Activated CD4-positive, alpha-beta T cell treated with anti-CD3 and anti-CD28 coated beads for 36 hours (primary cell): ENCODE measurements at regions of chr14 and their contacts with region 1.

Region 1: GRCh38 chr14:67666750-67667449 is 7.5 kb downstream of the VTI1B start:
- DNase-seq: peak; percentile 46
- ATAC-seq: peak; percentile 80
- H3K4me3 Mint-ChIP-seq: no peak overlapping the region
- H3K27ac Mint-ChIP-seq: peak overlapping the region; percentile 68
- H3K4me1 Mint-ChIP-seq: peaks cover 46% of the 10 kb centered on the region
- H3K27me3 Mint-ChIP-seq: no peaks in the 10 kb centered on the region

Region 2: GRCh38 chr14:67319142-67319541 is 347.8 kb before region 1 on chr14:
- CTCF ChIA-PET with region 1: no interaction called
- POLR2A ChIA-PET with region 1: no interaction called
- intact Hi-C with region 1: no loop called
- DNase-seq: no peak
- ATAC-seq: no peak
- H3K4me3 Mint-ChIP-seq: no peak overlapping the region
- H3K27ac Mint-ChIP-seq: no peak overlapping the region
- H3K4me1 Mint-ChIP-seq: no peaks in the 10 kb centered on the region
- H3K27me3 Mint-ChIP-seq: no peaks in the 10 kb centered on the region

Region 3: GRCh38 chr14:67426983-67427606 is 239.8 kb before region 1 on chr14:
- CTCF ChIA-PET with region 1: interaction called, 12 read pairs
- POLR2A ChIA-PET with region 1: no interaction called
- intact Hi-C with region 1: loop called in 1 of 2 experiments (anchors 1 kb)
- DNase-seq: peak; percentile 85
- ATAC-seq: peak; percentile 98
- H3K4me3 Mint-ChIP-seq: no peak overlapping the region
- H3K27ac Mint-ChIP-seq: no peak overlapping the region
- H3K4me1 Mint-ChIP-seq: no peaks in the 10 kb centered on the region
- H3K27me3 Mint-ChIP-seq: peaks cover 19% of the 10 kb centered on the region

Region 4: GRCh38 chr14:67583711-67584644 is 82.9 kb before region 1 on chr14:
- CTCF ChIA-PET with region 1: interaction called, 53 read pairs
- POLR2A ChIA-PET with region 1: no interaction called
- intact Hi-C with region 1: loop called (anchors 1 to 2 kb)
- DNase-seq: peak; percentile 43
- ATAC-seq: peak; percentile 78
- H3K4me3 Mint-ChIP-seq: no peak overlapping the region
- H3K27ac Mint-ChIP-seq: no peak overlapping the region
- H3K4me1 Mint-ChIP-seq: no peaks in the 10 kb centered on the region
- H3K27me3 Mint-ChIP-seq: no peaks in the 10 kb centered on the region

Region 5: GRCh38 chr14:67619446-67620216 is 47.3 kb before region 1 on chr14 and contains the start of gene ARG2:
- CTCF ChIA-PET with region 1: interaction called, 65 read pairs
- POLR2A ChIA-PET with region 1: interaction called, 3 read pairs
- intact Hi-C with region 1: loop called (anchors 1 kb)
- DNase-seq: peak; percentile 99
- ATAC-seq: peak; percentile 88
- H3K4me3 Mint-ChIP-seq: peak within 1 kb of the TSS; percentile 77
- H3K27ac Mint-ChIP-seq: peak within 1 kb of the TSS; percentile 73
- H3K4me1 Mint-ChIP-seq: peaks cover 31% of the 10 kb centered on the region
- H3K27me3 Mint-ChIP-seq: peaks cover 8% of the 10 kb centered on the region
- total RNA-seq, gene ARG2: 11.9 TPM

Region 6: GRCh38 chr14:67704484-67705089 is 37.7 kb after region 1 on chr14:
- CTCF ChIA-PET with region 1: interaction called, 20 read pairs
- POLR2A ChIA-PET with region 1: no interaction called
- intact Hi-C with region 1: loop called (anchors 1 to 5 kb)
- DNase-seq: peak; percentile 35
- ATAC-seq: peak; percentile 87
- H3K4me3 Mint-ChIP-seq: no peak overlapping the region
- H3K27ac Mint-ChIP-seq: no peak overlapping the region
- H3K4me1 Mint-ChIP-seq: no peaks in the 10 kb centered on the region
- H3K27me3 Mint-ChIP-seq: peaks cover 3% of the 10 kb centered on the region

Region 7: GRCh38 chr14:67875175-67876006 is 208.5 kb after region 1 on chr14:
- CTCF ChIA-PET with region 1: no interaction called
- POLR2A ChIA-PET with region 1: no interaction called
- intact Hi-C with region 1: no loop called
- DNase-seq: no peak
- ATAC-seq: no peak
- H3K4me3 Mint-ChIP-seq: no peak overlapping the region
- H3K27ac Mint-ChIP-seq: no peak overlapping the region
- H3K4me1 Mint-ChIP-seq: peaks cover 2% of the 10 kb centered on the region
- H3K27me3 Mint-ChIP-seq: no peaks in the 10 kb centered on the region